Activated CD8-positive, alpha-beta T cell treated with anti-CD3 and anti-CD28 coated beads, Interleukin-2, amount 10 ng/mL, durations not matched to agents 7 days and 5 days (primary cell): ENCODE measurements at regions of chr14 and their contacts with region 1.

Region 1: DNA sequence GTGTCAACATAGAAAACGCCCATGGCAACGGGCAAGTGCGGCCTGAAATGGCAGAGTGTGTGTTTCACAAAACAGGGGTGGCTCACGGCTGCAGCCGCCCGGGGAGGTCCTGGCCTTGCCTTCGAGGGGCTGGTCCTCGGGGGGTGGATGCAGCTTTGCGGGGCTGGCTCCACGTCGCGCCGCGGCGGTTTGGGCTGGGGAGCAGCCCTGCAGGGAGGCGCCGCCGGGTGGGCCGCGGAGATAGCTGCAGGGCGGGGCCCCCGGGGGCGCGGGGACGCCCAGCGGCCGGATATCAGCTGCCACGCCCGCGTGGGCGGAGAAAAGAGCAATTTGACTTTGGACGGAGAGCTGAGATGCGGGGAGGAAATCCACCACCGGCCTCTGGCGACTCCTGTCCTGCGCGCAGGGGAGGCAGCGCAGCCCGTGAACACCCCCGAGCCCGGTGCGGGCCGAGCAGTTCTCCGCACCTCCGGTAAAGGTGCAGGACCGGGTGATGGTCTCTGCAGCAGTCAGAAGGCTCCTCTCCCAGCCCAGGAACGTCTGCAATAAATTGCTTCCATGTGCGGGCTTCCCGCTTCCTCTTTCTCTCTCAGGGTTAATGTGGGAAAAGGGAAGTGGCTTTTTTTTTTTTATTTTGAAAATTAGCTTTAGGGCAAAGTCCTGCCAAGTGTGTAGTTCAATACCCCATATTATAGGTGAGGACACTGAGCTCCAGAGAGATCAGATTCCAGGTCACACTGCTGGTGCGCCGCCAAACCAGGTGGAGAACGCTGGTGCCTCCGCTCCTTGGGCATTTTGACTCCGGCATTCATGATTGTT is 110.5 kb downstream of the ARF6 start:
- DNase-seq: peak; percentile 89
- ATAC-seq: peak; percentile 46
- H3K4me3 Mint-ChIP-seq: peak overlapping the region; percentile 76
- H3K27ac Mint-ChIP-seq: peak overlapping the region; percentile 96
- H3K4me1 Mint-ChIP-seq: peaks cover 74% of the 10 kb centered on the region
- H3K27me3 Mint-ChIP-seq: no peaks in the 10 kb centered on the region

Region 2: GRCh38 chr14:49852301-49853157 is 150.9 kb before region 1 on chr14 and contains the start of gene NEMF:
- CTCF ChIA-PET with region 1: interaction called, 19 read pairs
- POLR2A ChIA-PET with region 1: interaction called, 24 read pairs
- DNase-seq: peak; percentile 91
- ATAC-seq: peak; percentile 84
- H3K4me3 Mint-ChIP-seq: peak within 1 kb of the TSS; percentile 97
- H3K27ac Mint-ChIP-seq: peak within 1 kb of the TSS; percentile 98
- H3K4me1 Mint-ChIP-seq: peaks cover 41% of the 10 kb centered on the region
- H3K27me3 Mint-ChIP-seq: no peaks in the 10 kb centered on the region
- total RNA-seq, gene NEMF: 75.6 to 78.9 TPM

Region 3: GRCh38 chr14:49879683-49880204 is 123.7 kb before region 1 on chr14:
- CTCF ChIA-PET with region 1: interaction called, 18 read pairs
- POLR2A ChIA-PET with region 1: interaction called, 12 read pairs
- DNase-seq: peak; percentile 73
- ATAC-seq: peak; percentile 91
- H3K4me3 Mint-ChIP-seq: no peak overlapping the region
- H3K27ac Mint-ChIP-seq: peak overlapping the region; percentile 43
- H3K4me1 Mint-ChIP-seq: peaks cover 29% of the 10 kb centered on the region
- H3K27me3 Mint-ChIP-seq: peaks cover 2% of the 10 kb centered on the region

Region 4: DNA sequence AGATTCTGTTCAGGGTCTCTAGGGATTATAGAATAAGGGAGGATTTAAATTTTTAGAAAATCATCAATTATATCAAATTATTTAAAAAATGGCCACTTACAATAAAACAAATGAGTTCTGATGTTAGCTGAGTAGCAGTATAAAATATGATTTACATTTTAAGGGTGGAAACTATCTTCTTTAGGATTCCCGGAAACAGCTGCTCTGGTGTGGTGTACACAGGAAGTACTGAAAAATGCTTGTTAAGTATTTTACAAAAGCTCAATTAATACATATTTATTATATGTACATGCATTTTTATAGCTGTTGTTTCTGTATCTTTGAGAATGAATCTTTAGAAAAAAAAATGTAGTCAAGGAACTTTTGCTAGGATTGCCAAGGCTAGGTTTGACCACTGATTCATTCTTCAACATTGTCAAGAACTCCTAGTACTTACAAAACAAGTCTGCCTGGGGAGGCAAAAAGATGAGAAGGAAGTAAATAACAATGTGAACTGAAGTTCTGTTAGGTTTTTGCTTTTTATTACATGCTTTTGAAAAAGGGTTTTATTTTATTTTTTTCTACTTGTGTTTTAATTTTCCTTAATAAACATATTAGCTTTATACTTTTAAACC is 62.5 kb before region 1 on chr14:
- CTCF ChIA-PET with region 1: interaction called, 10 read pairs
- POLR2A ChIA-PET with region 1: interaction called, 25 read pairs
- DNase-seq: peak; percentile 44
- ATAC-seq: peak; percentile 54
- H3K4me3 Mint-ChIP-seq: peak overlapping the region; percentile 31
- H3K27ac Mint-ChIP-seq: peak overlapping the region; percentile 87
- H3K4me1 Mint-ChIP-seq: peaks cover 69% of the 10 kb centered on the region
- H3K27me3 Mint-ChIP-seq: no peaks in the 10 kb centered on the region

Region 5: GRCh38 chr14:49977126-49977841 is 26.1 kb before region 1 on chr14:
- CTCF ChIA-PET with region 1: interaction called, 54 read pairs
- POLR2A ChIA-PET with region 1: interaction called, 307 read pairs
- DNase-seq: peak; percentile 54
- ATAC-seq: peak; percentile 72
- H3K4me3 Mint-ChIP-seq: peak overlapping the region; percentile 62
- H3K27ac Mint-ChIP-seq: peak overlapping the region; percentile 87
- H3K4me1 Mint-ChIP-seq: peaks cover 78% of the 10 kb centered on the region
- H3K27me3 Mint-ChIP-seq: no peaks in the 10 kb centered on the region

Region 6: GRCh38 chr14:50018201-50018932 is 14.9 kb after region 1 on chr14:
- CTCF ChIA-PET with region 1: interaction called, 5 read pairs
- POLR2A ChIA-PET with region 1: interaction called, 14 read pairs
- DNase-seq: no peak
- ATAC-seq: no peak
- H3K4me3 Mint-ChIP-seq: no peak overlapping the region
- H3K27ac Mint-ChIP-seq: no peak overlapping the region
- H3K4me1 Mint-ChIP-seq: peaks cover 45% of the 10 kb centered on the region
- H3K27me3 Mint-ChIP-seq: no peaks in the 10 kb centered on the region

Region 7: GRCh38 chr14:50060871-50061663 is 57.6 kb after region 1 on chr14:
- CTCF ChIA-PET with region 1: interaction called, 29 read pairs
- POLR2A ChIA-PET with region 1: interaction called, 178 read pairs
- DNase-seq: peak; percentile 70
- ATAC-seq: peak; percentile 23
- H3K4me3 Mint-ChIP-seq: peak overlapping the region; percentile 95
- H3K27ac Mint-ChIP-seq: peak overlapping the region; percentile 99
- H3K4me1 Mint-ChIP-seq: peaks cover 94% of the 10 kb centered on the region
- H3K27me3 Mint-ChIP-seq: no peaks in the 10 kb centered on the region

Region 8: GRCh38 chr14:50191499-50191898 is 188.1 kb after region 1 on chr14:
- CTCF ChIA-PET with region 1: no interaction called
- POLR2A ChIA-PET with region 1: no interaction called
- DNase-seq: no peak
- ATAC-seq: no peak
- H3K4me3 Mint-ChIP-seq: no peak overlapping the region
- H3K27ac Mint-ChIP-seq: no peak overlapping the region
- H3K4me1 Mint-ChIP-seq: no peaks in the 10 kb centered on the region
- H3K27me3 Mint-ChIP-seq: no peaks in the 10 kb centered on the region

Region 9: GRCh38 chr14:50388256-50388931 is 385.0 kb after region 1 on chr14:
- CTCF ChIA-PET with region 1: no interaction called
- POLR2A ChIA-PET with region 1: no interaction called
- DNase-seq: no peak
- ATAC-seq: no peak
- H3K4me3 Mint-ChIP-seq: no peak overlapping the region
- H3K27ac Mint-ChIP-seq: peak overlapping the region; percentile 10
- H3K4me1 Mint-ChIP-seq: no peaks in the 10 kb centered on the region
- H3K27me3 Mint-ChIP-seq: no peaks in the 10 kb centered on the region